Upper lobe of right lung (tissue), 1 donor: ENCODE measurements at regions of chr11 and their contacts with region 1.

Region 1: DNA sequence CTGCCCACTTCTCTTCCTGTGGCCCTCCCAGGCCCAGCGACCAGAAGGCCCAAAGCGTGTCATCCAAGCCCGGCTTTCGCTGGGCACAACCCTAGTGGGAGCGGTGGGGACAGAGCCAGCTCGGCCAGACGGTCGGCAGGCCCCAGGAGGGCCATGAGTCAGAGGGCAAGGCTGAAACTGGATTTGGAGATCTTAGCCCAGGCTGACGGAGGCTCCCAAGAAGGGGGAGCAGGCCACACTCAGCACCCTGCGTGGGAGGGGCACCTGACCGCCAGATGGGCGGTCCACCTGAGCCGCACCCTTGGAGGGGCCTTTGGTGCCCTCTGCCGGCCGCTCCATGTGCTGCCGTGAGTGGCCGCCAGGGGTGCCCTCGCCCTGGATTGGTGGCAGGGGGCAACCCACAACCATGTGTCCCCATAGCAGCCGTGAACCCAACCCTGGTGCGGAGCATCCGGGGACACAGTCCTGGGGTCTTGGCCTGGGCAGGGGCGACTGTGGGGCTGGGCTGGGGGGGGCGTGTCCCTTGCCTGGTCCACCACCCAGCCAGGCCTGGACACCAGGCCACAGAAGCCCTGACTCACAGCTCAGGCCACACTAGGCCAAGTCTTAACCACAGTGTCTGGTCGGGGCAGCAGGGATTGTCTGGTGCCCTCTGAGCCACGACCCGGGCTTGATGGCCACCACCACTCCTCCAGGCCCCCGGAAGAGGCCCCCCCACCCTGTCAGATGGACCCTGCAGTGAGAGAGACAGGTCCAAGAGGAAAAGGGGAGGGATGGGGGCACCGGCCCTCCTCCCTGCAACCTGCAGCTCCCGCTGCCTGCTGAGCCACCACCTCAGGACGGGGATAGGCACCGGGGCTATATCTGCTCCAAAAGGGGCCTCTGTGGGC is 19.2 kb upstream of the TALDO1 start:
- DNase-seq: peak; percentile 93
- ATAC-seq: peak; percentile 94
- H3K4me3 ChIP-seq: no peak overlapping the region
- H3K27ac ChIP-seq: peak overlapping the region; percentile 26
- H3K4me1 ChIP-seq: peaks cover 18% of the 10 kb centered on the region
- H3K27me3 ChIP-seq: peaks cover 8% of the 10 kb centered on the region
- CTCF ChIP-seq: peak; percentile 92

Region 2: DNA sequence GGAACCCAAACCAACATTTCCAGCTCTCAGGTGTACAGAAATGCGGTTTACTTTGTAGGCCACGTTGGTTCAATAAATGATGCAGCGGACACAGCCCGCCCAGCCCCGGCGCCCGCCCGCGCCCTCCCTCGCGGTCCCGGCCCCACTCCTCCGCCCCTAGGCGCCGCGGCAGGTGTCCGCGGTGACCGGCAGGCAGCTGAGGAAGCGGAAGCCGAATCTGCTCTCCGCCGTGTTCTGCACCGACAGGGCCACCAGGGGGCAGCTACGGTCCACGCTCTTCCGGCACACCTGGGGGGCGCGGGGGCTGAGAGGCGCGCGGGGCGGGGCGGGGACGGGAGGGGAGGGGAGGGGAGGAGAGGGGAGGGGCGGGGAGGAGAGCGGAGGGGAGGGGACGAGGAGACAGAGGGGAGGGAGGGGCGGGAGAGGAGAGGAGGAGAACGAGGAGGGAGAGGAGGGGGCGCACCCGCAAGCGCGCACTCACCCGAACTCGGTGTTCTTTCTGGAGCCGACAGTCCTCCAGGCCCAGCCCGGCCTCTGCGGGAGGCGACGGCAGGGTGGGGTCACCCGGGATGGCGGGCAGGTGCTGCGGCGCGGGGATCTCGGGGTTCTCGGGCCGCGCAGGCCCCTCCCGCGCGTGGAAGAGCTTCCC is 173.2 kb before region 1 on chr11:
- intact Hi-C with region 1: loop called (anchors 10 kb)
- DNase-seq: peak; percentile 88
- ATAC-seq: peak; percentile 82
- H3K4me3 ChIP-seq: peak overlapping the region; percentile 52
- H3K27ac ChIP-seq: peak overlapping the region; percentile 17
- H3K4me1 ChIP-seq: peaks cover 15% of the 10 kb centered on the region
- H3K27me3 ChIP-seq: peaks cover 25% of the 10 kb centered on the region
- CTCF ChIP-seq: peak; percentile 56

Region 3: GRCh38 chr11:662689-663274 is 65.3 kb before region 1 on chr11:
- intact Hi-C with region 1: loop called (anchors 5 kb)
- DNase-seq: peak; percentile 85
- ATAC-seq: peak; percentile 93
- H3K4me3 ChIP-seq: no peak overlapping the region
- H3K27ac ChIP-seq: no peak overlapping the region
- H3K4me1 ChIP-seq: no peaks in the 10 kb centered on the region
- H3K27me3 ChIP-seq: no peaks in the 10 kb centered on the region
- CTCF ChIP-seq: peak; percentile 70